Gastrocnemius medialis (tissue), 4 donors: ENCODE measurements at regions of chr12 and their contacts with region 1.

Region 1: GRCh38 chr12:1804545-1805332 is 15.6 kb upstream of the LRTM2 start:
- DNase-seq: peak; percentile 75 to 86
- ATAC-seq: peak; percentile 59 to 84
- H3K4me3 ChIP-seq: no peak overlapping the region
- H3K27ac ChIP-seq: peak overlapping the region; percentile 69 to 80 (median 76)
- H3K4me1 ChIP-seq: peaks cover 10 to 16% of the 10 kb centered on the region in 2 donors
- H3K27me3 ChIP-seq: no peaks in the 10 kb centered on the region
- CTCF ChIP-seq: no peak
- POLR2A ChIP-seq: no peak

Region 2: DNA sequence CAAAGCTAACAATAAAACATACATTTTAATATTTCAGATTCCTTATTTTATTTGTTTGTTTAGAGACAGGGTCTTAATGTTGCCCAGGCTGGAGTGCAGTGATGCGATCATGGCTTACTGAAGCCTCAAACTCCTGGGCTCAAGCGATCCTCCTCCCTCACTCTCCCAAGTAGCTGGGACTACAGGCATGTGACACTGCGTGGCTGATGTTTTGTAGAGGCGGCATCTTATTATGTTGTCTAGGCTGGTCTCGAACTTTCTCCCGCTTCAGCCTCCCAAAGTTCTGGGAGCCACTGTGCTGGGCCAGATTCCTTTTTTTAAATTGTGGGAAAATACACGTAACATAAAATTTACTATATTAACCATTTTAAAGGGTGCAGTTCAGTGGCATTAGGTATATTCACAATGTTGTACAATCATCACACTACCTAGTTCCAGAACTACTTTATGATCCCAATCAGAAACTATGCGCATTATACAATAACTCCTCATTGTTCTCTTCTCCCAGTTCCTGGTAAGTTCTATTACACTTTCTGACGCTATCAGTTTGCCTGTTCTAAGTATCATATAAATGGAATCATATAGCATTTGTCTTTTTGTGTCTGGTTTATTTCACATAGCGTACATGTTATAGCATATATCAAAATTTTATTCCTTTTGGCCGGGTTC is 73.6 kb before region 1 on chr12:
- in situ Hi-C with region 1: no loop called
- intact Hi-C with region 1: no loop called
- DNase-seq: no peak
- ATAC-seq: no peak
- H3K4me3 ChIP-seq: no peak overlapping the region
- H3K27ac ChIP-seq: no peak overlapping the region
- H3K4me1 ChIP-seq: peaks cover 3 to 24% of the 10 kb centered on the region in 2 donors
- H3K27me3 ChIP-seq: no peaks in the 10 kb centered on the region
- CTCF ChIP-seq: no peak
- POLR2A ChIP-seq: no peak

Region 3: GRCh38 chr12:1830981-1831963 is 26.5 kb after region 1 on chr12:
- in situ Hi-C with region 1: no loop called
- intact Hi-C with region 1: loop called (anchors 1 kb)
- DNase-seq: peak; percentile 26 to 55
- ATAC-seq: peak; percentile 70 to 76
- H3K4me3 ChIP-seq: no peak overlapping the region
- H3K27ac ChIP-seq: no peak overlapping the region
- H3K4me1 ChIP-seq: no peaks in the 10 kb centered on the region
- H3K27me3 ChIP-seq: peaks cover 0 to 14% (median 8%) of the 10 kb centered on the region in 3 donors
- CTCF ChIP-seq: no peak
- POLR2A ChIP-seq: no peak

Region 4: GRCh38 chr12:1907652-1908611 is 103.2 kb after region 1 on chr12:
- in situ Hi-C with region 1: no loop called
- intact Hi-C with region 1: no loop called
- DNase-seq: peak in 1 of 2 donors; percentile 11
- ATAC-seq: no peak
- H3K4me3 ChIP-seq: no peak overlapping the region
- H3K27ac ChIP-seq: no peak overlapping the region
- H3K4me1 ChIP-seq: peaks cover 16 to 26% of the 10 kb centered on the region in 2 donors
- H3K27me3 ChIP-seq: no peaks in the 10 kb centered on the region
- CTCF ChIP-seq: no peak
- POLR2A ChIP-seq: no peak

Region 5: GRCh38 chr12:2004113-2004929 is 199.6 kb after region 1 on chr12 and contains the start of gene DCP1B:
- in situ Hi-C with region 1: no loop called
- intact Hi-C with region 1: loop called (anchors 2 kb)
- DNase-seq: peak; percentile 90 to 95
- ATAC-seq: peak; percentile 99 to 100
- H3K4me3 ChIP-seq: peak within 1 kb of the TSS; percentile 82 to 99 (median 98)
- H3K27ac ChIP-seq: peak within 1 kb of the TSS; percentile 90 to 95 (median 92)
- H3K4me1 ChIP-seq: peaks cover 20 to 27% of the 10 kb centered on the region in 2 donors
- H3K27me3 ChIP-seq: no peaks in the 10 kb centered on the region
- CTCF ChIP-seq: peak in 1 of 5 experiments; percentile 25
- POLR2A ChIP-seq: peak; percentile 25 to 35
- total RNA-seq, gene DCP1B: 11.5 to 13.5 (median 12.4) TPM

Region 6: DNA sequence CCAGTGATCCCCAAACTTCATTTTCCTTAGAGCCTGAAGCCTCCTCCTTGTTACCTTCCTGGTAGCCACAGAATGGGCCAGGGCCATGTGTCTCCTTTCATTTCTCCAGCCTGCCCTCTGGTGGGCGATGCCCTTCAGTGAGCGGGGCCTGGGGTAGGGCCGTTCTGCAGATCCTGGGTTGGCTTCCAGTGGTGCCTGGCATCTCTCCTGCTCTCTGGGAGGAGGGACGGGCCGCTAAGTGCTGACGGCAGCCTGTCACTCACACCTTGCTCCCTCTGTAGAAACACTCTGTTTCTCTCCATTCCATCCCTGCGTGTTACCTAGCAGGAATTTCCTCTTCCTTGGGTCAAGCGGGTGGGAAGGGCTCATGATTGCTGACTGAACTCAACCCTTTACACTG is 480.1 kb after region 1 on chr12:
- in situ Hi-C with region 1: loop called in 1 of 4 experiments (anchors 25 kb)
- intact Hi-C with region 1: no loop called
- DNase-seq: peak in 1 of 2 donors; percentile 48
- ATAC-seq: peak; percentile 51 to 52
- H3K4me3 ChIP-seq: no peak overlapping the region
- H3K27ac ChIP-seq: no peak overlapping the region
- H3K4me1 ChIP-seq: peaks cover 12 to 16% of the 10 kb centered on the region in 2 donors
- H3K27me3 ChIP-seq: peaks cover 0 to 9% (median 2%) of the 10 kb centered on the region in 3 donors
- CTCF ChIP-seq: peak in 4 of 5 experiments; percentile 27 to 53 (median 44)
- POLR2A ChIP-seq: no peak

Region 7: GRCh38 chr12:2395354-2395977 is 590.7 kb after region 1 on chr12:
- in situ Hi-C with region 1: no loop called
- intact Hi-C with region 1: no loop called
- DNase-seq: no peak
- ATAC-seq: peak in 1 of 2 donors; percentile 44
- H3K4me3 ChIP-seq: no peak overlapping the region
- H3K27ac ChIP-seq: no peak overlapping the region
- H3K4me1 ChIP-seq: peaks cover 10% of the 10 kb centered on the region in 2 donors
- H3K27me3 ChIP-seq: no peaks in the 10 kb centered on the region
- CTCF ChIP-seq: peak; percentile 61 to 78 (median 74)
- POLR2A ChIP-seq: no peak

Region 8: DNA sequence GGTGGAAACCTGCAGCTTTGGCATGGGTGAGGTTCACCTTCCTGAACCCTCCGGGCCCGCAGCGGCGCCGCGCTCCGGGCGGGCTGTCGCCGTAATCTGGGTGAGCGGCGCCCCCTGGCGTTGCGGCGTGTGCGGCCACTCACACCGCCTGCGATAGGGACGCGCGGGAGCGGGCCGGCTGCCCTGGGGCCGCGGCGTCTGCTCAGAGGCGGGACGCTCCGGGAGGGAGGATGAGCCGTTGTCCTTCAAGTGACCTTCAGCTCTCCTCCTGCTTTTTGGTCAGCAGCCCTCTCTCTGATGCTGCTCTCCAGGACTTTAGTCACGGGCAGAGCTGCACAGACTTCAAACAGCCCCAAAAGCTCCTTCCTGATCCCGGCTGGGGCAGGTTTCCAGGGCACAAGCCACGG is 778.4 kb after region 1 on chr12:
- in situ Hi-C with region 1: loop called in 1 of 4 experiments (anchors 25 kb)
- intact Hi-C with region 1: no loop called
- DNase-seq: peak in 1 of 2 donors; percentile 28
- ATAC-seq: peak; percentile 45 to 76
- H3K4me3 ChIP-seq: peak overlapping the region in 1 of 4 donors; percentile 36
- H3K27ac ChIP-seq: no peak overlapping the region
- H3K4me1 ChIP-seq: peaks cover 0 to 3% of the 10 kb centered on the region in 2 donors
- H3K27me3 ChIP-seq: peaks cover 2 to 34% (median 12%) of the 10 kb centered on the region in 3 donors
- CTCF ChIP-seq: peak; percentile 65 to 91 (median 81)
- POLR2A ChIP-seq: no peak